ENCODE measurements at regions of chr19 and their contacts with region 1.

Region 1: GRCh38 chr19:48588670-48589399 is 17.7 kb upstream of the SPACA4 start:
- DNase-seq: peak; percentile 53 to 92 (median 83)
- ATAC-seq: peak; percentile 84 to 92 (median 89)
- H3K4me3 ChIP-seq: peak overlapping the region in 1 of 2 donors; percentile 45
- H3K4me3 Mint-ChIP-seq: peak overlapping the region; percentile 60 to 75 (median 66)
- H3K27ac ChIP-seq: peak overlapping the region; percentile 34
- H3K27ac Mint-ChIP-seq: peak overlapping the region; percentile 20 to 26
- H3K4me1 ChIP-seq: peaks cover 0 to 20% of the 10 kb centered on the region in 2 experiments
- H3K4me1 Mint-ChIP-seq: peaks cover 14 to 24% (median 14%) of the 10 kb centered on the region in 3 donors
- H3K27me3 ChIP-seq: peaks cover 0 to 16% of the 10 kb centered on the region in 2 experiments
- H3K27me3 Mint-ChIP-seq: peaks cover 2 to 7% of the 10 kb centered on the region in 2 donors

Region 2: GRCh38 chr19:48492925-48493717 is 95.7 kb before region 1 on chr19:
- CTCF ChIA-PET with region 1: interaction called, 6 to 19 read pairs
- POLR2A ChIA-PET with region 1: no interaction called
- DNase-seq: peak; percentile 56 to 93 (median 80)
- ATAC-seq: peak; percentile 69 to 78 (median 74)
- H3K4me3 ChIP-seq: peak overlapping the region; percentile 47 to 59
- H3K4me3 Mint-ChIP-seq: peak overlapping the region; percentile 55 to 63 (median 61)
- H3K27ac ChIP-seq: no peak overlapping the region
- H3K27ac Mint-ChIP-seq: peak overlapping the region in 1 of 2 donors; percentile 19
- H3K4me1 ChIP-seq: peaks cover 2 to 58% of the 10 kb centered on the region in 2 experiments
- H3K4me1 Mint-ChIP-seq: peaks cover 30 to 49% (median 32%) of the 10 kb centered on the region in 3 donors
- H3K27me3 ChIP-seq: peaks cover 3 to 76% of the 10 kb centered on the region in 2 experiments
- H3K27me3 Mint-ChIP-seq: peaks cover 18 to 35% of the 10 kb centered on the region in 2 donors

Region 3: GRCh38 chr19:48506138-48506733 is 82.6 kb before region 1 on chr19:
- CTCF ChIA-PET with region 1: interaction called, 16 to 35 read pairs
- POLR2A ChIA-PET with region 1: interaction called in 1 of 2 experiments, 4 read pairs
- DNase-seq: peak in 3 of 35 experiments; percentile 20 to 69 (median 38)
- ATAC-seq: peak in 1 of 4 experiments; percentile 18
- H3K4me3 ChIP-seq: no peak overlapping the region
- H3K4me3 Mint-ChIP-seq: no peak overlapping the region
- H3K27ac ChIP-seq: no peak overlapping the region
- H3K27ac Mint-ChIP-seq: peak overlapping the region in 1 of 2 donors; percentile 39
- H3K4me1 ChIP-seq: peaks cover 8 to 29% of the 10 kb centered on the region in 2 experiments
- H3K4me1 Mint-ChIP-seq: peaks cover 12 to 26% (median 25%) of the 10 kb centered on the region in 3 donors
- H3K27me3 ChIP-seq: peaks cover 0 to 4% of the 10 kb centered on the region in 2 experiments
- H3K27me3 Mint-ChIP-seq: no peaks in the 10 kb centered on the region

Region 4: DNA sequence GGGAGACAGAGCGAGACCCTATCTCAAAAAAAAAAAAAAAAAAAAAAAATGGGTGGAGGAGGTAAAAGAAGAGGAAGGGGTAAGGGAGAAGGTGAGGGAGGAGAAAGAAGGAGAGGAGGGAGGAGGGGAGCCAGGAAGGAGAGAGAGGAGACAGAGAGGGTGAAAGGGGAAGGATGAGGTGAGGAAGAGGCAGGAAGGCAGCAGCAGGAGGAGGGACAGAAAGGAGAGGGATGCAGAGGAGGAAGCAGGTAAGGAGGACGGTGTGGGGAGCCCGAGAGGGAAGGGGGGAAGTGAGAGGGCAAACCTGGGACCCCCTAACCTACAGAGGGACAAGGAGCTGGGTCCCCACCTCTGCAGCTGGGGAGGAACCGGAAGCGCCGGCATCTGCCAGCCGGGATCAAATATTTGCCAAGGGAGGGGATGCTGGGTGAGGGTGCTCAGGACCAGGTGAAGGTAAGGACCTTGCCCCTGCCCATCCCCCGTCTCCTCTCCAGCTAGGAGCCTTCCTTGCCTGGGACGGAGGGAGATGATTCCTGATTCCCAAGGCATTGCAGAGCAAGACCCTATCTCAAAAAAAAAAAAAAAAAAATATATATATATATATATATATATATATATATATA is 13.4 kb after region 1 on chr19:
- CTCF ChIA-PET with region 1: interaction called in 1 of 2 experiments, 3 read pairs
- POLR2A ChIA-PET with region 1: interaction called in 1 of 2 experiments, 11 read pairs
- DNase-seq: no peak
- ATAC-seq: no peak
- H3K4me3 ChIP-seq: no peak overlapping the region
- H3K4me3 Mint-ChIP-seq: no peak overlapping the region
- H3K27ac ChIP-seq: no peak overlapping the region
- H3K27ac Mint-ChIP-seq: no peak overlapping the region
- H3K4me1 ChIP-seq: peaks cover 0 to 8% of the 10 kb centered on the region in 2 experiments
- H3K4me1 Mint-ChIP-seq: peaks cover 0 to 4% (median 4%) of the 10 kb centered on the region in 3 donors
- H3K27me3 ChIP-seq: peaks cover 0 to 20% of the 10 kb centered on the region in 2 experiments
- H3K27me3 Mint-ChIP-seq: no peaks in the 10 kb centered on the region